Ascending aorta (tissue), 2 donors: ENCODE measurements at regions of chr1 and their contacts with region 1.

Region 1: GRCh38 chr1:40040511-40041465 is at the start of gene CAP1:
- DNase-seq: peak; percentile 96 to 100
- H3K4me3 ChIP-seq: peak within 1 kb of the TSS; percentile 89 to 92
- H3K27ac ChIP-seq: peak within 1 kb of the TSS; percentile 99 to 100
- H3K4me1 ChIP-seq: peaks cover 20 to 47% of the 10 kb centered on the region in 2 donors
- H3K27me3 ChIP-seq: no peaks in the 10 kb centered on the region
- CTCF ChIP-seq: no peak
- total RNA-seq, gene CAP1: 252 TPM

Region 2: GRCh38 chr1:38859561-38860453 is 1181.0 kb before region 1 on chr1 and contains the start of gene RRAGC:
- intact Hi-C with region 1: loop called (anchors 10 kb)
- DNase-seq: peak; percentile 100
- H3K4me3 ChIP-seq: peak within 1 kb of the TSS; percentile 91 to 97
- H3K27ac ChIP-seq: peak within 1 kb of the TSS; percentile 80 to 93
- H3K4me1 ChIP-seq: peaks cover 6 to 28% of the 10 kb centered on the region in 2 donors
- H3K27me3 ChIP-seq: no peaks in the 10 kb centered on the region
- CTCF ChIP-seq: no peak
- total RNA-seq, gene RRAGC: 6.2 TPM

Region 3: DNA sequence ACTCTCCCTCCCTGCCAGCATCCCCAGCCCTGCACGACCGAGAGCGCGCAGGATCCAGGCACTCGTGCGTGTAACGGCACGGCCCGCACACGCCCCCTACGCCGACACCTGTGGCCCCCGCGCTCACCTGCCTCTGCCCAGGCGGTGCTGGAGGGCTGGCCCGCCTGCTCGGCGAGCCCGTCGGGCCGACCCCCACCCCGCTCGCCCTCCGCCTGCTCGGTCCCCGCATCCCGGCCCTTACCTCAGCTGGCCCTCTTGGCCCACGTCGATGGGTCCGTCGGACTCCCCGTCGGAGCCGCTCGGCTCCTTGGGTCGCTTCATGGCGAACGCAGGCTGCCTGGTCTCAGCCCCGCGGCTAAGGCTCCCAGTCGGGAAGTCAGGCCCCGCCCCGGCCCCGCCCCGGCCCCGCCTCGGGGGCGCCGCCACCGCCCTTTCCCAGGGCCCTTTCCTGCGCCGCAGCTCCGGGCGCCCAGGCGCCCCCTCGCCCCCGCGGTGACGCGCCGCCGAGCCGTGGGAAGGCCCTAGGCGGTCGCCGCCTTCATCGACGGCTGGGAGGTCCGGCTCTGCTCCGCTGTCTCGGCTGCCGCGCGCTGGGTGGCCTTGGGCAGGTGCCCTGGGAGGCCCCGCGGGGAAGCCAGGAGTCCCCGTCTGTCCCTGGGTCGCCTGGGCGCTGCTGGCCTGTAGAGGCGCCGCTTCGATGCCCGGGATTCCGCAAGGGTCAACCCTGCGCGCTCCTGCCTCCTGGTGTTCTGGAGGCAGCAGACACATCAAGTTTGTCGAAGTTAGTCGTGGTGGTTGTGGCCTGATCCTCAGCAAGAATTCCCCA is 401.3 kb before region 1 on chr1 and contains the start of gene HEYL:
- intact Hi-C with region 1: loop called (anchors 10 kb)
- DNase-seq: peak in 1 of 2 donors; percentile 88
- H3K4me3 ChIP-seq: peak within 1 kb of the TSS; percentile 76 to 83
- H3K27ac ChIP-seq: peak within 1 kb of the TSS; percentile 96 to 98
- H3K4me1 ChIP-seq: peaks cover 3 to 19% of the 10 kb centered on the region in 2 donors
- H3K27me3 ChIP-seq: no peaks in the 10 kb centered on the region
- CTCF ChIP-seq: peak; percentile 73 to 77 (median 76)
- total RNA-seq, gene HEYL: 34.0 TPM

Region 4: GRCh38 chr1:39886757-39887231 is 154.0 kb before region 1 on chr1:
- intact Hi-C with region 1: loop called (anchors 5 kb)
- DNase-seq: no peak
- H3K4me3 ChIP-seq: no peak overlapping the region
- H3K27ac ChIP-seq: no peak overlapping the region
- H3K4me1 ChIP-seq: peaks cover 4 to 6% of the 10 kb centered on the region in 2 donors
- H3K27me3 ChIP-seq: no peaks in the 10 kb centered on the region
- CTCF ChIP-seq: no peak

Region 5: DNA sequence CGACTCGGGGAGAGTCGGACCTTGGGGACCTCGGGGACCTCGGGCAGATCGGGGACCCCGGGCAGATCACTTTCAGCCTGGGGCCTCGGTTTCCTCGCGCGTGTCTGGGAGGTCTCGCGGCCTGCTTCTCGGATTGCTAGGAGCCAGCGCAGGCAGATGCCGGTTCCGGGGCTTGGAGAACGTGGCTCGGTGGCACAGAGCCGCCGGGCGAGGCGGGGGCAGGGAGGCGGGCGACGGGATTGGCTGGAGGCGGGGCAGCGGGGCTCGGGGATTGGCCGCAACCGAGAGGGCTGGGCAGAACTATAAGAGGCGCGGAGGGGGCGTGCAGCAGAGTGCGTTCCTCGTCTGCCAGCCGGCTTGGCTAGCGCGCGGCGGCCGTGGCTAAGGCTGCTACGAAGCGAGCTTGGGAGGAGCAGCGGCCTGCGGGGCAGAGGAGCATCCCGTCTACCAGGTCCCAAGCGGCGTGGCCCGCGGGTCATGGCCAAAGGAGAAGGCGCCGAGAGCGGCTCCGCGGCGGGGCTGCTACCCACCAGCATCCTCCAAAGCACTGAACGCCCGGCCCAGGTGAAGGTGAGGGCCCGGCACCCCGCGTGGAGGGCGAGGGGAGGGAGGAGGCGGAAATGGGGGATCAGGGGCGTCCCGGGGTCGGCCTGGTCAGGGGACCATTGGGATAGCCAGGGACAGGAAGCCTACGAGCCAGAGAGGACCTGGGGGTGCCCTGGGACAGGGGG is 85.8 kb before region 1 on chr1 and contains the start of gene MFSD2A:
- intact Hi-C with region 1: loop called (anchors 10 kb)
- DNase-seq: peak; percentile 64 to 95
- H3K4me3 ChIP-seq: peak within 1 kb of the TSS; percentile 60 to 70
- H3K27ac ChIP-seq: peak within 1 kb of the TSS; percentile 41 to 42
- H3K4me1 ChIP-seq: peaks cover 2 to 12% of the 10 kb centered on the region in 2 donors
- H3K27me3 ChIP-seq: no peaks in the 10 kb centered on the region
- CTCF ChIP-seq: no peak
- total RNA-seq, gene MFSD2A: 0.32 TPM

Region 6: DNA sequence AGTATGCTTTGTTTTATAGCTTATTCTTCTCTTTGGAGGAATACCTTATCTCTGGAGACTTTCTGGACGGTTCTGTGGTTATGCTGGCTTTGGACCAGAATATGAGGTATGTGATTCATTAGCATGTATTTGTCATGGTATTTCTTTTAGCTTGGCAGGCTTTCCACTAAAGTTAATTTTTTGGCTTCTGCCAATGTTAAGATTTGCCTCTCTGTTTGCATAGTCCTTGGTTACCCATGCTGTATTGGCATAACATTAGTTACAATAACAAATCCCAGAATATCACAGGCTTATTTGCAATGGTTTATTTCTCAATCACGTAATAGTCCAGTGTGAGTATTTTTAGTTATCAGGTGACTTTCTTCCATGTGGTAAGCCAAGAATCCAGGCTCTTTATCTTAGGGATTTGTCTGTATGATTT is 227.0 kb after region 1 on chr1:
- intact Hi-C with region 1: loop called (anchors 2 kb)
- DNase-seq: peak in 1 of 2 donors; percentile 69
- H3K4me3 ChIP-seq: peak overlapping the region in 1 of 2 donors; percentile 11
- H3K27ac ChIP-seq: peak overlapping the region; percentile 81 to 89
- H3K4me1 ChIP-seq: peaks cover 0 to 57% of the 10 kb centered on the region in 2 donors
- H3K27me3 ChIP-seq: no peaks in the 10 kb centered on the region
- CTCF ChIP-seq: no peak